PC-3 (cell line): ENCODE measurements at regions of chr4 and their contacts with region 1.

Region 1: GRCh38 chr4:38013461-38014366 is 53.5 kb downstream of the PTTG2 start:
- DNase-seq: peak; percentile 62
- ATAC-seq: peak; percentile 96
- H3K4me3 ChIP-seq: no peak overlapping the region
- H3K27ac ChIP-seq: no peak overlapping the region
- H3K4me1 ChIP-seq: peaks cover 14% of the 10 kb centered on the region; the same call in 1 of the 2 replicates
- H3K27me3 ChIP-seq: no peaks in the 10 kb centered on the region
- CTCF ChIP-seq: no peak

Region 2: DNA sequence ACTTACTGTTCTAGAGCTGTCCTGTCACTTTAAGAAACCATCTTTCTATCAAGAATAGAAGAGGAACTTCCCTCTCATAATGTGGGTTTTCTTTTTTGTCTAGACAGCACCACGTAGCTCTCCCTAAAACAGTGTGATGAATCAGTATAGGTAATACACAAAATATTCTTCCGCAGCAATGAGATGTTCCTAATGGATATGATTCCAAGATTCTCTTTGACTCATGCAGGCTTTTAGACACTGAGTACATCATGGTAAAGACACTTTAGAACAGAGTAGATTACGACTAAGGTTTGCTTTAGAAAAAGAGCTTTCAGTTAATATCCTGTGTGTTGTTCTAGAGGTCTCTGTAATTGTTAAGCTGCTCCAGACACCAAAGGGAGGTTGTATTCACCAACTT is 16.3 kb after region 1 on chr4:
- CTCF ChIA-PET with region 1: no interaction called
- POLR2A ChIA-PET with region 1: no interaction called
- intact Hi-C with region 1: loop called (anchors 2 kb)
- DNase-seq: no peak
- ATAC-seq: no peak
- H3K4me3 ChIP-seq: no peak overlapping the region
- H3K27ac ChIP-seq: no peak overlapping the region
- H3K4me1 ChIP-seq: no peaks in the 10 kb centered on the region
- H3K27me3 ChIP-seq: no peaks in the 10 kb centered on the region
- CTCF ChIP-seq: no peak

Region 3: GRCh38 chr4:38482696-38483095 is 469.0 kb after region 1 on chr4:
- CTCF ChIA-PET with region 1: no interaction called
- POLR2A ChIA-PET with region 1: no interaction called
- intact Hi-C with region 1: no loop called
- DNase-seq: no peak
- ATAC-seq: no peak
- H3K4me3 ChIP-seq: no peak overlapping the region
- H3K27ac ChIP-seq: no peak overlapping the region
- H3K4me1 ChIP-seq: no peaks in the 10 kb centered on the region
- H3K27me3 ChIP-seq: no peaks in the 10 kb centered on the region
- CTCF ChIP-seq: no peak